ENCODE measurements at regions of chr14 and their contacts with region 1.

Region 1: DNA sequence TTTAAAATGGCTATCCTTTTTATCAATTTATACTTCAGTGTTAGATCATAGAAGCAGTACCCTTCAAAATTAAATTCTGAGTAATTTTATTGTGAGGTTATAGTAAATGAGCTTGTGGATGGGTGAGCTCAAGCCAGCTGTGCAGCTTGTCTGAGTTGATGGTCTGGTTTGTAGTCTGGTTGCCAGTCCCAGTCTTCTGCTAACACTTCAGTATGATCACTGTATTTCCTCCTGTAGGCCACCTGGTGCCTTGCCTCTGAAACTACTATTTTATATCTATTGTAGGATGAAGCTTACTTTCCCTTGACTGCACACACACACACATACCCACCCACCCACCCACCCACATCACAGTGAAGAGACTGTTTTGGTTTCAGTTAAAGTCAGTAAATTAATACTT is 496.4 kb downstream of the PCNX1 start:
- DNase-seq: peak; percentile 38
- CTCF ChIP-seq: peak; percentile 10

Region 2: DNA sequence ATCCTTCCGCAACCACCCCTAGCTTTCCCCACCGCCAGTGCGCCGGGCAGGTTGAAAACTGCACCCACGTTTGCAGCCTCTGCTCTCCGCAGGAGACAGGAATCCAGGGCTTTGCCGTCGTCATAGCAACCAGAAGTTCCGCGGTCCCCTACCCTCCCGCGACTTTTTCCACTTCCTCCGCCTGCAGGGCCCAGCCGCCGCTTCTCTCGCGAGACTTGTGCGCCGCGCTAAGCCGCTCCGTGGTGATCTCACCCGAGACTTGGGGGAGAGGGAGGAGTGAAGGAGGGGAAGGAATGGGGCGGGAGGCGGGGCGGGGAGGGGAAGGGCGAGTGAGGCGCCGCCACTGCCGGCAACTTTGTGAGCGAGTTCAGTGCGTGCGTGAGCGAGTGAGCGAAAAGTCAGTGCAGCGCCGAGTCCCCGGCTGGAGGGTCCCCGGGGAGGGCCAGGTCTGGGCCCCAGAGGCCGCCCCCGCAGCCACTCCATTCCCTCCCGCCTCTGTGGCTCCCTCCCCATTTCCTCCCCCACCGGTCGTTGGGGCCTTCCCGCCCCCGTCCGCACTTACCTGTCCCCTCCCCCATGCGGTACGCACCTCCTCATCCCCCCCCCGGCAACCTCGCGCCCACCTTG is 83.4 kb before region 1 on chr14:
- CTCF ChIA-PET with region 1: interaction called, 21 read pairs
- POLR2A ChIA-PET with region 1: interaction called, 6 read pairs
- DNase-seq: peak; percentile 96
- CTCF ChIP-seq: no peak

Region 3: GRCh38 chr14:71415404-71415690 is 11.7 kb after region 1 on chr14:
- CTCF ChIA-PET with region 1: interaction called, 13 read pairs
- POLR2A ChIA-PET with region 1: interaction called, 4 read pairs
- DNase-seq: no peak
- CTCF ChIP-seq: no peak

Region 4: GRCh38 chr14:71591929-71592328 is 188.3 kb after region 1 on chr14:
- CTCF ChIA-PET with region 1: no interaction called
- POLR2A ChIA-PET with region 1: no interaction called
- DNase-seq: no peak
- CTCF ChIP-seq: no peak

Measured in GM10248 (cell line).